ENCODE measurements at regions of chr6 and their contacts with region 1.

Region 1: GRCh38 chr6:144202879-144203468 is 52.7 kb downstream of the STX11 start:
- DNase-seq: no peak
- ATAC-seq: no peak
- H3K4me3 ChIP-seq: no peak overlapping the region
- H3K27ac ChIP-seq: no peak overlapping the region
- H3K4me1 ChIP-seq: no peaks in the 10 kb centered on the region
- H3K27me3 ChIP-seq: no peaks in the 10 kb centered on the region
- CTCF ChIP-seq: no peak

Region 2: GRCh38 chr6:144702781-144703180 is 499.8 kb after region 1 on chr6:
- intact Hi-C with region 1: loop called in 1 of 2 experiments (anchors 5 kb)
- DNase-seq: no peak
- ATAC-seq: no peak
- H3K4me3 ChIP-seq: no peak overlapping the region
- H3K27ac ChIP-seq: no peak overlapping the region
- H3K4me1 ChIP-seq: no peaks in the 10 kb centered on the region
- H3K27me3 ChIP-seq: no peaks in the 10 kb centered on the region
- CTCF ChIP-seq: no peak

Measured in psoas muscle (tissue), 8 donors.